ENCODE measurements at regions of chr7 and their contacts with region 1.

Region 1: DNA sequence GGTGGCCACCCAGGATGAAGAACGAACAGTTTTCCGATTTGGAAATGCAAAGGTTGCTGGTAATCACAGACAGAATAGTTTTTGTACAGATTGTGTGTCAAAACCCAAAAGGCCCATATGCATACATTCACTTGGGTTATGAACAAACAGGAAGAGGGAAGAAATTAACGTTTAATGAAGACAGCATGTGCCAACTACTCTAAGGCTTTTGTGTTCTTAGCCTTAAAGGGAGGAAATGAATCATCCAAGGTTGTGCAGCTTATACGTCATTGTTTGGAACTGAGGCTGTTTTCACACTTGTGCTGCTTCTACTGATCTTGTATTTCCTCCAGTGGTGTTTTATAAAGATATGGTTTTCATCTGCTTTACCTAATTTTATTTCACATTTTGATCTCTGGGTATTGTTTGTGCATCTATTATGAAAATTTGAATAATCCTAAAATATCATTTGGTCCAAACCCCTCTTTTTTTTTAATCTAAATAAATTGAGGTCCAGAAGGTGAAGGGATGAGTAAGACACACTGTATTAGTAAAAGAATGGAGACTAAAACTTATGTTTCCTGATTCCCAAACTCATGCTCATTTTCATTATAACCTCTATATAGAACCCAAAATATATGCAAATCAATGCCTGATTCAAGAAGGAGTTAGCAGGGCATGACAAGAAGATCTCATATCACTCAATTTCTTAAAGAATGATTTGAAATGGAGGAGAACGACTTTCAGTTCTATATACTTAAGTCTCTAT is 373.1 kb downstream of the THSD7A start:
- DNase-seq: peak in 1 of 5 donors; percentile 14
- ATAC-seq: peak; percentile 51 to 92 (median 72)
- H3K4me3 ChIP-seq: no peak overlapping the region
- H3K27ac ChIP-seq: peak overlapping the region in 5 of 12 donors; percentile 0 to 45 (median 15)
- H3K4me1 ChIP-seq: peaks cover 0 to 13% (median 2%) of the 10 kb centered on the region in 12 donors
- H3K27me3 ChIP-seq: no peaks in the 10 kb centered on the region
- CTCF ChIP-seq: no peak
- POLR2A ChIP-seq: no peak

Region 2: DNA sequence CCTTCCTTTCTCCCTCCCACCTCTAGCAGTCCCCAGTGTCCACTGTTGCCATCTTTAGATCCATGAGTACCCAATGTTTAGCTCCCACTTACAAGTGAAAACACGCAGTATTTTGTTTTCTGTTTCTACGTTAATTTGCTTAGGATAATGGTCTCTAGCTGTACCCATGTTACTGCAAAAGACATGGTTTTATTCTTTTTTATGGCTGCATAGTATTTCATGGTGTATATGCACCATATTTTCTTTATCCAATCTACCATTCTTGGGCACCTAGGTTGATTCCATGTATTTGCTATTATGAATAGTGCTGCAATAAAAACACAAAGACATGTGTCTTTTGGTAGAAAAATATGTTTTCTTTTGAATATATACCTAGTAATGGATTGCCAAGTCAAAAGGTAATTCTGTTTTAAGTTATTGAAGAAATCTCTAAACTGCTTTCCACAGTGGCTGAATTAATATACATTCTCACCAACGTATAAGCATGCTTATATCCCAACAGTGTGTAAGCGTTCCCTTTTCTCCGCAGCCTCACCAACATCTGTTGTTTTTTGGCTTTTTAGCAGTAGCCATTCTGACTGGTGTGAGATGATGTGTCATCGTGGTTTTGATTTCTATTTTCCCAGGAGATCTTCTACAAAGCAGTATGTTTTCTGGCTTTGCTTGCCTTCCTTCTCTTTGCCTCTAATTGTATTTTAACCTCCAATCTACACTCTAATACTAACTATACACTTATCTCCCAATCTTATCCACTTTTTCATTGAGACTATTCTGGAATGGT is 664.7 kb before region 1 on chr7:
- intact Hi-C with region 1: no loop called
- DNase-seq: no peak
- ATAC-seq: no peak
- H3K4me3 ChIP-seq: no peak overlapping the region
- H3K27ac ChIP-seq: no peak overlapping the region
- H3K4me1 ChIP-seq: no peaks in the 10 kb centered on the region
- H3K27me3 ChIP-seq: no peaks in the 10 kb centered on the region
- CTCF ChIP-seq: no peak
- POLR2A ChIP-seq: no peak

Region 3: GRCh38 chr7:11506417-11506816 is 47.5 kb after region 1 on chr7:
- intact Hi-C with region 1: no loop called
- DNase-seq: no peak
- ATAC-seq: no peak
- H3K4me3 ChIP-seq: no peak overlapping the region
- H3K27ac ChIP-seq: no peak overlapping the region
- H3K4me1 ChIP-seq: no peaks in the 10 kb centered on the region
- H3K27me3 ChIP-seq: no peaks in the 10 kb centered on the region
- CTCF ChIP-seq: no peak
- POLR2A ChIP-seq: no peak

Region 4: GRCh38 chr7:11579141-11579540 is 120.2 kb after region 1 on chr7:
- intact Hi-C with region 1: no loop called
- DNase-seq: no peak
- ATAC-seq: no peak
- H3K4me3 ChIP-seq: no peak overlapping the region
- H3K27ac ChIP-seq: no peak overlapping the region
- H3K4me1 ChIP-seq: peaks cover 0 to 2% (median 0%) of the 10 kb centered on the region in 12 donors
- H3K27me3 ChIP-seq: no peaks in the 10 kb centered on the region
- CTCF ChIP-seq: no peak
- POLR2A ChIP-seq: no peak

Region 5: GRCh38 chr7:11613292-11613930 is 154.5 kb after region 1 on chr7:
- intact Hi-C with region 1: loop called in 1 of 10 experiments (anchors 10 kb)
- DNase-seq: no peak
- ATAC-seq: no peak
- H3K4me3 ChIP-seq: no peak overlapping the region
- H3K27ac ChIP-seq: no peak overlapping the region
- H3K4me1 ChIP-seq: no peaks in the 10 kb centered on the region
- H3K27me3 ChIP-seq: no peaks in the 10 kb centered on the region
- CTCF ChIP-seq: no peak
- POLR2A ChIP-seq: no peak

Measured in heart left ventricle (tissue), 16 donors.